Activated naive CD4-positive, alpha-beta T cell treated with anti-CD3 and anti-CD28 coated beads for 36 hours (primary cell): ENCODE measurements at regions of chr6 and their contacts with region 1.

Region 1: DNA sequence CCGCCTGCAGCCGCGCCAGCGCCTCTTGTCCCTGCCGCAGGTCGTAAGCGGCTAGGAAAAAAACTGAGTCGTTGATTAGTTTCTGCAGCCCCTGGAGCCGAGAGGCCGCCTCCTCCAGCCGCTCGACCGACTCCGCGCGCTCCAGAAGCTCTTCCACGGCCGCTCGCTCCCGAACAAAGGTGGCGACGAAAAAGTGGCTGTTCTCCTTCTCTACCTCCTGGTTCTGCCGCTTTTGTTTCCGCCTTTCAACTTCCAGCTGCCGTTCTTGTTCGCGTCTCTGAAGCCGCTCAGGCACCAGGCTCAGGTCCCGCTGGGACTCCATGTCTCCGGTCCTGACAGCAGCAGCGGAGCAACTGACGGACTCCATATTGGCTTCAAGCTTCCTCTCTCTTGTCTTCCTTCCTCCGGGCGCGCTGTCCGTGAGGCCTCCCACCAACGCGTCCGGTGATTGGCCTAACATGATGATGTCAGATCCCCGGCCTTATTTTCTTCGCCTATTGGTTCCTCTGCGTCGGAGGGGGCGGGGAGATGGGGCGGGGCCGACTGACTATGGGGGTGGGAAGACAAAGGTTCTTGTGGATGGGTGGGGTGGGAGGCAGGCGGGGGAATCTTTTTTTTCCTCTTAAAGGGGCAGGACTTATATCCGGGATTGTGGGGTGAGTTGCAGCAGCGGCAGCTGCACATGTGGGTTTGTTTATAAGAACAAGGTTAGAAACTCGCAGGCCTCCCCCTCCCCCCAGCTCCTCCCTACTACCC is at the start of gene TBCC:
- DNase-seq: peak; percentile 98
- H3K4me3 Mint-ChIP-seq: peak within 1 kb of the TSS; percentile 100
- H3K27ac Mint-ChIP-seq: peak within 1 kb of the TSS; percentile 99
- H3K4me1 Mint-ChIP-seq: peaks cover 25% of the 10 kb centered on the region
- H3K27me3 Mint-ChIP-seq: no peaks in the 10 kb centered on the region
- total RNA-seq, gene TBCC: 12.6 to 12.9 TPM

Region 2: DNA sequence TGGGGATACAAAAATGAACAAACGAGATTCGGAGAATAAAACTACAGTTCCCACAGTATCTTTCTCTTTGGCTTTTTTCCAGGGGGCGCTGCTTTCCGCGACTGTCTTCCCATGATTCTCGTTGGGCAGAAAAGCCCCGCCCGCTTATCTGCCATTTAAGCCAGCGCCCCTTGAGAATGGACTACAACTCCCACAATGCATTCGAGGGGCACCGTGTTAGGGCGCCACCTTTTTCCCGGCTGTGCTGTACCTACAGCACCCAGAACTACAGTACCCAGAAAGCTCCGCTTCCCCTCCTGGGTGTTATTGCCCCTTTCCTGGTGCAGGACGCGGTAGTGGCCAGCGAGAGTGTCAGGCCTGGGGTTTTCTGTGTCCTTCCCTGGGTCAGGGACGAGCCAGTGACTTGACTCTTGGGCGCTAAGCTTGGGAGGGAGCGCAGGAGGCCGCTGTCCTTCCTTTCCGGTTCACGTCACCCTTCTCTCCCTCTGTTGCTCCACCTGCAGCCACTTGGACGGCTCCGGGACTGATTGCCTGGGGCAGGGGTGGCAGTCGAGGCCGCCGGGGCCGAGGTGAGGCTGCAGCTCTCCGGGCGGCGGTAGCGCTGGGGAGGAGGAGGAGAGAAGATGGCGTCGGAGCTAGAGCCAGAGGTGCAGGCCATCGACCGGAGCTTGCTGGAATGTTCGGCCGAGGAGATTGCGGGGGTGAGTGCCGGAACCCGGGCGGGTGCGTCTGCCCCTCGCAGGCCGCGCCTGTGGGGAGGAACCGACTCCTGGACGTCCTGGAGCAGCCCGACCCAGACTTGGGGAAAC is 182.0 kb before region 1 on chr6 and contains the start of gene UBR2:
- CTCF ChIA-PET with region 1: no interaction called
- intact Hi-C with region 1: loop called (anchors 1 kb)
- DNase-seq: peak; percentile 98
- H3K4me3 Mint-ChIP-seq: peak within 1 kb of the TSS; percentile 97
- H3K27ac Mint-ChIP-seq: peak within 1 kb of the TSS; percentile 92
- H3K4me1 Mint-ChIP-seq: peaks cover 26% of the 10 kb centered on the region
- H3K27me3 Mint-ChIP-seq: no peaks in the 10 kb centered on the region
- total RNA-seq, gene UBR2: 23.1 to 23.5 TPM

Region 3: GRCh38 chr6:42771741-42772100 is 25.8 kb after region 1 on chr6:
- CTCF ChIA-PET with region 1: interaction called, 7 read pairs
- intact Hi-C with region 1: loop called (anchors 1 kb)
- DNase-seq: no peak
- H3K4me3 Mint-ChIP-seq: peak overlapping the region; percentile 71
- H3K27ac Mint-ChIP-seq: peak overlapping the region; percentile 96
- H3K4me1 Mint-ChIP-seq: peaks cover 62% of the 10 kb centered on the region
- H3K27me3 Mint-ChIP-seq: no peaks in the 10 kb centered on the region

Region 4: GRCh38 chr6:42879372-42880239 is 133.7 kb after region 1 on chr6 and contains the start of gene RPL7L1:
- CTCF ChIA-PET with region 1: no interaction called
- intact Hi-C with region 1: loop called (anchors 1 kb)
- DNase-seq: peak; percentile 87
- H3K4me3 Mint-ChIP-seq: peak within 1 kb of the TSS; percentile 98
- H3K27ac Mint-ChIP-seq: peak within 1 kb of the TSS; percentile 99
- H3K4me1 Mint-ChIP-seq: peaks cover 23% of the 10 kb centered on the region
- H3K27me3 Mint-ChIP-seq: no peaks in the 10 kb centered on the region
- total RNA-seq, gene RPL7L1: 99.0 to 101 TPM

Region 5: GRCh38 chr6:42978839-42979522 is 233.1 kb after region 1 on chr6 and contains the start of gene PEX6:
- CTCF ChIA-PET with region 1: no interaction called
- intact Hi-C with region 1: loop called (anchors 1 kb)
- DNase-seq: peak; percentile 97
- H3K4me3 Mint-ChIP-seq: peak within 1 kb of the TSS; percentile 95
- H3K27ac Mint-ChIP-seq: peak within 1 kb of the TSS; percentile 99
- H3K4me1 Mint-ChIP-seq: peaks cover 53% of the 10 kb centered on the region
- H3K27me3 Mint-ChIP-seq: no peaks in the 10 kb centered on the region
- total RNA-seq, gene PEX6: 17.1 to 18.2 TPM

Region 6: DNA sequence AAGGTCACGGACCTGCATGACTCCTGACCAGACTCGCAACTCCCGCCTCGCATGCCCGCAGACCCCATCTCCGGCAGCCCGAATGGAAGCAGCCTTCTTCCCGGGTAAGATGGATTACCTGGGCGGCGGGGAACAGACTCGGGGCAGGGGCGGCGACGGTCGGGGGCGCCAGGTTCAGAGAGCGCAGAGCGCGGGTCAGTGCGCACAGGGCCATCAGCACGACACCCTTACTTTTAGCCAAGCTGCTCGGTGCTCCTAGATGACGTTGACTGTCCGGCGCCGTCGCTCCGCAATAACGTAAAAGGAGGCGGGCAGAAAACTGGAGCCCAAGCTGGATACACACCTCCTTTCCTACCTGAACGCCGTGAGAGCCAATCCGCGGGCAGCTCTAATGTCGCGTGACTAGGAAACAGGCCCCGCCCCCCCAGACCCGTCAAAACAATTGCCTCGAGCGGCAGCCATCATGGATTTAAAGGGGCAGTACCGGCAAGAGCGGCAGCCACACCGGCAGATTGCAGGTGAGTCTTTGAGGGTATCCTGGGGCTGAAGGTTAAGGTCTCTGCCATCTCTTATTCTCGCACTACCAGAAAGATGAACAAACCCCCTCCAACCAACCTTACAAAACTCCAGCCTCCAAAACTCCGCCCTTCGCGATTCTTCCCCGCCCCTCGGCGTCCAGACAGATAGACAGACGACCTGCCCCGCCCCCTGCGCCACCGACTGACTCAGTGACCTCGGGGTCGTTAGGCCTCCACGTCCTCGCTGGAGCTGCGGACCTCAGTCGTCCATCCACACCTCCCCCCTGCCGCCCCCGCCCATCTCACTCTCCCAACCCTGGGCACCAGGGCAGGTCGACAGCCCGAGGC is 313.5 kb after region 1 on chr6 and contains the starts of genes KLC4 and MRPL2:
- CTCF ChIA-PET with region 1: no interaction called
- intact Hi-C with region 1: loop called (anchors 1 kb)
- DNase-seq: peak; percentile 99
- H3K4me3 Mint-ChIP-seq: peak within 1 kb of the TSS; percentile 86
- H3K27ac Mint-ChIP-seq: peak within 1 kb of the TSS; percentile 93
- H3K4me1 Mint-ChIP-seq: peaks cover 29% of the 10 kb centered on the region
- H3K27me3 Mint-ChIP-seq: no peaks in the 10 kb centered on the region
- total RNA-seq, gene KLC4: 12.0 to 12.3 TPM
- total RNA-seq, gene MRPL2: 87.7 to 95.1 TPM

Region 7: GRCh38 chr6:43181942-43182860 is 436.3 kb after region 1 on chr6 and contains the start of gene CUL9:
- CTCF ChIA-PET with region 1: no interaction called
- intact Hi-C with region 1: no loop called
- DNase-seq: peak; percentile 85
- H3K4me3 Mint-ChIP-seq: peak within 1 kb of the TSS; percentile 95
- H3K27ac Mint-ChIP-seq: peak within 1 kb of the TSS; percentile 84
- H3K4me1 Mint-ChIP-seq: peaks cover 47% of the 10 kb centered on the region
- H3K27me3 Mint-ChIP-seq: no peaks in the 10 kb centered on the region
- total RNA-seq, gene CUL9: 43.1 to 49.3 TPM